CD4-positive, alpha-beta memory T cell (primary cell): ENCODE measurements at regions of chr11 and their contacts with region 1.

Region 1: GRCh38 chr11:124953753-124954589 is at the start of gene CCDC15:
- DNase-seq: peak; percentile 91 to 95 (median 93)
- H3K4me3 ChIP-seq: peak within 1 kb of the TSS; percentile 33 to 63
- H3K4me3 Mint-ChIP-seq: peak within 1 kb of the TSS in 1 of 8 donors; percentile 32
- H3K27ac ChIP-seq: peak within 1 kb of the TSS; percentile 71
- H3K27ac Mint-ChIP-seq: no peak within 1 kb of the TSS
- H3K4me1 ChIP-seq: peaks cover 50% of the 10 kb centered on the region
- H3K4me1 Mint-ChIP-seq: peaks cover 0 to 12% (median 7%) of the 10 kb centered on the region in 4 donors
- H3K27me3 ChIP-seq: no peaks in the 10 kb centered on the region
- H3K27me3 Mint-ChIP-seq: no peaks in the 10 kb centered on the region
- total RNA-seq, gene CCDC15: 2.6 to 2.7 TPM

Region 2: DNA sequence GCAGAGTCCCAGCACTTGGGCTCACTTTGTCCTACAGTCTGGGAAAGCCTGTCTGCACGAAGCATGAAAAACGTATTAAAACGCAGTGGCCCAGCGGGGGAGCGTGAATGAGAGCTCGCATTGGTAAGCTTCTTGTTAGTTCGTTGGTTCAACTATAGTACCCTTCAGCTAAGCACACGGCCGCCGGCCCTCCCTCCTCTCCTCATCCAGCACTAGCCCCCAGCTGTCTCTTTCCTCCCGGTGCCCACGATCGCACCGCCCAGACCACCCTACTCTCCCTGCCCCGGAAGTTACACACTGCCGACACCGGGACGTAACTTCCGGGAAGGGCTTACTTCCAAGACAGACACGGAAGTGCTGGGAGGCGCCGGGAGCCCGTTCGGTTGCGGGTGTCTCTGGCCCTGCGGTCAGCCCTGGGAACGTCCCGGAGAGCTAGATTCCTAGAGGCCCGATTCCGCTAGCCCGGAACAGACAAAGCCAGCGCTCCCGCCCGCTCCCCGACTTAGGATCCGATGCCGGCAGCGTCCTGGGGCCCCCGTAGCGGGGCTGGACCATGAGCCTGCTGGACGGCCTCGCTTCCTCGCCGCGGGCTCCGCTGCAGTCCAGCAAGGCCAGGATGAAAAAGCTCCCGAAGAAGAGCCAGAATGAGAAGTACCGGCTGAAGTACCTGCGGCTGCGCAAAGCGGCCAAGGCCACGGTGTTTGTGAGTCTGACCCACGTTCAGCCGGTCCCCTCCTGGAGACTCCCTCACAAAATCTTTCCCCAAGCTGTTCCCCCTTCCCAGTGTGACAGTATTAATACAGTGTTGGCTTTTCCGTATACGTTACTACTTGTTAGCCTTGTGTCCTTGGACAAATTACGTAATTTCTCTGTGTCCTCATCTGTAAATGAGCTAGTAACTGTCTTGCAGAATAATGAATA is 331.2 kb before region 1 on chr11 and contains the start of gene TBRG1:
- CTCF ChIA-PET with region 1: no interaction called
- POLR2A ChIA-PET with region 1: interaction called, 6 read pairs
- intact Hi-C with region 1: loop called (anchors 2 kb)
- DNase-seq: peak; percentile 76 to 88 (median 82)
- H3K4me3 ChIP-seq: peak within 1 kb of the TSS; percentile 63 to 86
- H3K4me3 Mint-ChIP-seq: peak within 1 kb of the TSS; percentile 93 to 100 (median 98)
- H3K27ac ChIP-seq: peak within 1 kb of the TSS; percentile 95
- H3K27ac Mint-ChIP-seq: peak within 1 kb of the TSS; percentile 92 to 100 (median 99)
- H3K4me1 ChIP-seq: peaks cover 34% of the 10 kb centered on the region
- H3K4me1 Mint-ChIP-seq: peaks cover 23 to 53% (median 38%) of the 10 kb centered on the region in 4 donors
- H3K27me3 ChIP-seq: no peaks in the 10 kb centered on the region
- H3K27me3 Mint-ChIP-seq: peaks cover 1 to 6% of the 10 kb centered on the region in 2 donors
- total RNA-seq, gene TBRG1: 69.3 to 75.8 TPM

Region 3: DNA sequence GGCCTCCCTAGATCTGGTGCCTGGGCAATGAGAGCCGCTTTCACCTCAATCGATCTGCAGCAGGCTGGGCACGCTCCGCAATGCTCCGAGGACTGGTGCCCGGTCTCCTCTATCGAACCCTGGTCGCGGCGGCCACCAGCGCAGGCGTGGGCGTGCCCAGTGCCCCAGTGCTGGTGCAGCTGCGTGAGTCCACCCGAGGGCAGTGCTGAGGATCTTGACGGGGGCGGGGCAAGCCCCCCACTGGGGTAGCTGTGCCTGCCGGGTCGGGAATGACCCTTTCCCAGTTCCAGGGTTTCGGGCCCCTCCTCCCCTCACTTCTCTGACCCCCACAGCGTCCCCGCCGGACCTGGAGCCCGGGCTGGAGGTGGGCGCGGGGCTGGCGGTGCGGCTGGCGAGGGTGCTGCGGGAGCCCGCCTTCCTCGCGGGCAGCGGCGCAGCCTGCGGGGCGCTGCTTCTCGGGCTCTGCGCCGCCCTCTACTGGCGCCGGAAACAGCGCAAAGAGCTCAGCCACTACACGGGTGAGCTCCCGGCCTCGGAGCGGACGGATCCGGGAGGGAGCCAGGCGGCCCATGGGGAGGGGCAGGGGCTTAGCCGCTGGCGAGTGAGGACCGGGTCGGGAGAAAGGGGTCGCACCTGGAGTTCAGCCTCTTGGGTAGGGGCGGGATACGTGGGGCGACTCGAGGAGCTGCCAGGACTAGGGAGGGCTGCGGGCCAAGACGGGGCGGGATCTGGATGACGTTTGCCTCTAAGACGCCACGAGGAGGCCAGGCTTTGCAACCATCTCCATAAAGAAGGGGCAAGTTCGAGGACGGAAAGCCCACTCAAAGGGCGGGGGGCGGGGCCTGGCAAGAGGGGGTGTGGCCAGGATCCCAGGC is 77.8 kb before region 1 on chr11:
- CTCF ChIA-PET with region 1: interaction called, 24 read pairs
- POLR2A ChIA-PET with region 1: interaction called, 24 read pairs
- intact Hi-C with region 1: loop called (anchors 1 kb)
- DNase-seq: peak; percentile 77 to 84 (median 79)
- H3K4me3 ChIP-seq: peak overlapping the region; percentile 11 to 58
- H3K4me3 Mint-ChIP-seq: peak overlapping the region; percentile 86 to 91 (median 90)
- H3K27ac ChIP-seq: peak overlapping the region; percentile 53
- H3K27ac Mint-ChIP-seq: peak overlapping the region; percentile 79 to 96 (median 90)
- H3K4me1 ChIP-seq: peaks cover 13% of the 10 kb centered on the region
- H3K4me1 Mint-ChIP-seq: peaks cover 4 to 29% (median 19%) of the 10 kb centered on the region in 4 donors
- H3K27me3 ChIP-seq: no peaks in the 10 kb centered on the region
- H3K27me3 Mint-ChIP-seq: peaks cover 18 to 25% of the 10 kb centered on the region in 2 donors

Region 4: DNA sequence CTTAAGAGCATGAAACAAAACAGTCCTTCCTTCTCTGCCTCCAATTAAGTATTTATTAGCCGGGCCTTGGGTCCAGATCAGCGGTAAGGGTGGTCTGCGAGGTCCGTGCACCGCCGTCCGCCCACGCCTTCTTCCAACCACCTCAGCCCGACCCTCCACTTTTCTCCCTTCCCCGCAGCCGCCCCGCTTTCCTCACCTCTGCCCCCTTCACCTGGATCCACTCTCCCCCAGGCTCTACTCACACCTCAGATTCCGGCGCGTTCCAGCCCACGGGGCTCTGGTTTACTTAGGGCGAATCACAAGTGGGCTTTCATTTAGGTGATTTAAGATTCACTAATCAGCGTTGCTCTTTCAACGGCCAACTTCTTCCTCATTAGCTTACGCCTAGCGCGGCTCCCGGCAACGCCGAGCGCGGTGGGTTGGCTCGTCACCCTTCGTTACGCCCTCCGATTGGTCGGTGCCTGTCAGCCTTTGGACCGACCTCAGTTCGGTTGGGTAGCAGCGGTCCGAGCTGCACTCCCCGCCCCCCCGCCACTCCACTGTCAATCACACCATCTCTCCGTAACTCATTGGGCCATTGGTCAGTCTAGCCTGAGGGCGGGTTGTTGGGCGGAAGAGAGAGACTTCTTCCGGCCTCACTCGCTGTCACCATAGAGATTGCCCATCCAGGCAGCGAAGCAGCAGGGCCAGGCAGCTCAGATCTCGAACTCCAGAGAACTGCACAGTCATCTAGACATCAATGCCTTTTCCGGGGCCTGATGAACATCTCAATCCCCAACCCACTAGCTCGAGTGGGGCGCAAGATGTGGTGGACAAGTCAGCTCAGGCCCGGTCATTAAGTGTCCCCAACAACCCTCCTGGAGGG is 157.6 kb after region 1 on chr11 and contains the start of gene TMEM218:
- CTCF ChIA-PET with region 1: interaction called, 6 read pairs
- POLR2A ChIA-PET with region 1: interaction called, 27 read pairs
- intact Hi-C with region 1: loop called (anchors 1 kb)
- DNase-seq: peak; percentile 94 to 97 (median 96)
- H3K4me3 ChIP-seq: peak within 1 kb of the TSS; percentile 72 to 89
- H3K4me3 Mint-ChIP-seq: peak within 1 kb of the TSS; percentile 92 to 100 (median 98)
- H3K27ac ChIP-seq: peak within 1 kb of the TSS; percentile 68
- H3K27ac Mint-ChIP-seq: peak within 1 kb of the TSS; percentile 74 to 99 (median 97)
- H3K4me1 ChIP-seq: peaks cover 18% of the 10 kb centered on the region
- H3K4me1 Mint-ChIP-seq: peaks cover 4 to 25% (median 18%) of the 10 kb centered on the region in 4 donors
- H3K27me3 ChIP-seq: no peaks in the 10 kb centered on the region
- H3K27me3 Mint-ChIP-seq: no peaks in the 10 kb centered on the region
- total RNA-seq, gene TMEM218: 15.1 to 16.6 TPM

Region 5: GRCh38 chr11:125887373-125888324 is 933.7 kb after region 1 on chr11 and contains the start of gene HYLS1:
- CTCF ChIA-PET with region 1: no interaction called
- POLR2A ChIA-PET with region 1: interaction called, 7 read pairs
- intact Hi-C with region 1: loop called (anchors 5 kb)
- DNase-seq: peak; percentile 96 to 99 (median 96)
- H3K4me3 ChIP-seq: peak within 1 kb of the TSS; percentile 67 to 73
- H3K4me3 Mint-ChIP-seq: peak within 1 kb of the TSS; percentile 89 to 99 (median 94)
- H3K27ac ChIP-seq: peak within 1 kb of the TSS; percentile 79
- H3K27ac Mint-ChIP-seq: peak within 1 kb of the TSS; percentile 96 to 99 (median 98)
- H3K4me1 ChIP-seq: peaks cover 33% of the 10 kb centered on the region
- H3K4me1 Mint-ChIP-seq: peaks cover 20 to 45% (median 30%) of the 10 kb centered on the region in 4 donors
- H3K27me3 ChIP-seq: no peaks in the 10 kb centered on the region
- H3K27me3 Mint-ChIP-seq: peaks cover 0 to 6% of the 10 kb centered on the region in 2 donors
- total RNA-seq, gene HYLS1: 8.1 to 8.2 TPM

Region 6: GRCh38 chr11:126211235-126212088 is 1257.5 kb after region 1 on chr11 and contains the starts of genes FAM118B and RPUSD4:
- CTCF ChIA-PET with region 1: no interaction called
- POLR2A ChIA-PET with region 1: no interaction called
- intact Hi-C with region 1: loop called (anchors 5 kb)
- DNase-seq: peak; percentile 98
- H3K4me3 ChIP-seq: peak within 1 kb of the TSS; percentile 44 to 91
- H3K4me3 Mint-ChIP-seq: peak within 1 kb of the TSS; percentile 99 to 100 (median 99)
- H3K27ac ChIP-seq: peak within 1 kb of the TSS; percentile 67
- H3K27ac Mint-ChIP-seq: peak within 1 kb of the TSS; percentile 91 to 99 (median 98)
- H3K4me1 ChIP-seq: peaks cover 24% of the 10 kb centered on the region
- H3K4me1 Mint-ChIP-seq: peaks cover 27 to 43% (median 32%) of the 10 kb centered on the region in 4 donors
- H3K27me3 ChIP-seq: no peaks in the 10 kb centered on the region
- H3K27me3 Mint-ChIP-seq: no peaks in the 10 kb centered on the region
- total RNA-seq, gene FAM118B: 12.6 to 13.2 TPM
- total RNA-seq, gene RPUSD4: 39.3 to 41.2 TPM